ENCODE measurements at regions of chr4 and their contacts with region 1.

Region 1: DNA sequence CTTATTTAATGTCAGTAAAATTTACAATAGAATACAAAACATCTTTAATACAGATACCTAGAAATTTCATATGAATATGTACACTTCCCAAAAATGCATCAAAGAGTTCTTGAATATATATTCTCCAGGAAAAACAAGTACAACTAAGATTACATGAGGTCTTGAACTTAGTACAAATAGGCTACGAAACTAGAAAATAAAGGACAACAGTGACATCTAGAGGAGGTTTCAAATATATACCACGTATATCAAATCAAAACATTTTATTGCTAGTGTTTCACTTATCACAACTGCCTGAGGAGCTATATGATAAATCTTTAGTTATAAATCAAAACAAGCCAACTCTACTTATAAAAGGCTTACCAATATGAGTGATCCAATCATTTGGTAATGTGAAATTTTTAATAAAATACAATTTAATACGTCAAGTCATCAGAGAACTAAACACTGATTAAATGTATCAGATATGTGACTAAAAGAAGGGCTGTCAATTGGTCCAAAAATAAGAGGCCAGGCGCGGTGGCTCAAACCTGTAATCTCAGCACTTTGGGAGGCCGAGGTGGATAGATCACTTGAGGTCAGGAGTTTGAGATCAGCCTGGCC is 36.6 kb downstream of the ANAPC10 start:
- DNase-seq: no peak
- H3K4me3 ChIP-seq: no peak overlapping the region
- H3K27ac ChIP-seq: no peak overlapping the region
- H3K4me1 ChIP-seq: peaks cover 0 to 11% (median 7%) of the 10 kb centered on the region in 4 donors
- H3K27me3 ChIP-seq: no peaks in the 10 kb centered on the region
- CTCF ChIP-seq: peak; percentile 37 to 53 (median 51)
- EP300 ChIP-seq: no peak
- POLR2A ChIP-seq: no peak

Region 2: GRCh38 chr4:144174401-144175067 is 886.9 kb before region 1 on chr4:
- in situ Hi-C with region 1: loop called in 3 of 4 experiments (anchors 10 to 25 kb)
- intact Hi-C with region 1: no loop called
- DNase-seq: no peak
- H3K4me3 ChIP-seq: no peak overlapping the region
- H3K27ac ChIP-seq: no peak overlapping the region
- H3K4me1 ChIP-seq: no peaks in the 10 kb centered on the region
- H3K27me3 ChIP-seq: no peaks in the 10 kb centered on the region
- CTCF ChIP-seq: peak; percentile 44 to 54 (median 45)
- EP300 ChIP-seq: no peak
- POLR2A ChIP-seq: no peak

Region 3: DNA sequence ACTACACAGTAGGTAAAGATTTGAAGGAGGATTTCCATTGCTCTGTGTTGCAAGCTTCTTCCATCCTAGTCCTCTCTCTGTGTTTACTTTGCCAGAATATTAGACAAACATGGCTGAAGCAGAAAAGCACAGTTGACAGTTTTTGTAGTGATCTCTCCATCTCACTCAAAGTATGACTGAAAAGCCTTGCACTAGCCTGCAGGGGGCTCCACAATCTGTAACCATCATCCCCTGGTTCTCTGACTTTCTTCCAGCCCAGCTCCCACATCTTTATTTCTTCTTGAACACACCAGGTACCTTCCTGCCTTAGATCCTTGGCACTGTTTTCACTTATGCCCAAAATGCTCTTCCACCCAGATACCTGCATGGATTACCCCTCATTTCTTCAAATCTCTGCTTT is 449.6 kb before region 1 on chr4:
- in situ Hi-C with region 1: loop called in 1 of 4 experiments (anchors 25 kb)
- intact Hi-C with region 1: no loop called
- DNase-seq: peak; percentile 9
- H3K4me3 ChIP-seq: no peak overlapping the region
- H3K27ac ChIP-seq: no peak overlapping the region
- H3K4me1 ChIP-seq: no peaks in the 10 kb centered on the region
- H3K27me3 ChIP-seq: no peaks in the 10 kb centered on the region
- CTCF ChIP-seq: peak in 2 of 5 experiments; percentile 9 to 30
- EP300 ChIP-seq: no peak
- POLR2A ChIP-seq: no peak

Region 4: GRCh38 chr4:145132511-145133098 is 71.2 kb after region 1 on chr4:
- in situ Hi-C with region 1: no loop called
- intact Hi-C with region 1: no loop called
- DNase-seq: no peak
- H3K4me3 ChIP-seq: no peak overlapping the region
- H3K27ac ChIP-seq: no peak overlapping the region
- H3K4me1 ChIP-seq: peaks cover 0 to 9% (median 2%) of the 10 kb centered on the region in 4 donors
- H3K27me3 ChIP-seq: no peaks in the 10 kb centered on the region
- CTCF ChIP-seq: no peak
- EP300 ChIP-seq: no peak
- POLR2A ChIP-seq: no peak